ENCODE measurements at regions of chr12 and their contacts with region 1.

Region 1: DNA sequence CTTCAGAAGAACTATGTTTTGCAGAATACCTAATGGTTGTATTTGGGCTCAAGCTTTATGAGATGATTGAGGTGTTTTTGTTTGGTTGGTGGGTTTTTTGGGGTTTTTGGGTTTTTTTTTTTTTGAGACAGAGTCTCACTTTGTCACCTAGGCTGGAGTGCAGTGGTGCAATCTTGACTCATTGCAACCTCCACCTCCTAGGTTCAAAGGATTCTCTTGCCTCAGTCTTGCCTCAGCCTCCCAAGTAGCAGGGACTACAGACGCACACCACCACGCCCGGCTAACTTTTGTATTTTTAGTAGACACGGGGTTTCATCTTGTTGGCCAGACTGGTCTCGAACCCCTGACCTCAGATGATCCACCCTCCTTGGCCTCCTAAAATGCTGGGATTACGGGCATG is 39.6 kb downstream of the ARL1 start:
- DNase-seq: no peak
- H3K4me3 ChIP-seq: no peak overlapping the region
- H3K27ac ChIP-seq: no peak overlapping the region
- H3K4me1 ChIP-seq: no peaks in the 10 kb centered on the region
- H3K27me3 ChIP-seq: no peaks in the 10 kb centered on the region
- CTCF ChIP-seq: no peak
- EP300 ChIP-seq: no peak
- POLR2A ChIP-seq: no peak

Region 2: DNA sequence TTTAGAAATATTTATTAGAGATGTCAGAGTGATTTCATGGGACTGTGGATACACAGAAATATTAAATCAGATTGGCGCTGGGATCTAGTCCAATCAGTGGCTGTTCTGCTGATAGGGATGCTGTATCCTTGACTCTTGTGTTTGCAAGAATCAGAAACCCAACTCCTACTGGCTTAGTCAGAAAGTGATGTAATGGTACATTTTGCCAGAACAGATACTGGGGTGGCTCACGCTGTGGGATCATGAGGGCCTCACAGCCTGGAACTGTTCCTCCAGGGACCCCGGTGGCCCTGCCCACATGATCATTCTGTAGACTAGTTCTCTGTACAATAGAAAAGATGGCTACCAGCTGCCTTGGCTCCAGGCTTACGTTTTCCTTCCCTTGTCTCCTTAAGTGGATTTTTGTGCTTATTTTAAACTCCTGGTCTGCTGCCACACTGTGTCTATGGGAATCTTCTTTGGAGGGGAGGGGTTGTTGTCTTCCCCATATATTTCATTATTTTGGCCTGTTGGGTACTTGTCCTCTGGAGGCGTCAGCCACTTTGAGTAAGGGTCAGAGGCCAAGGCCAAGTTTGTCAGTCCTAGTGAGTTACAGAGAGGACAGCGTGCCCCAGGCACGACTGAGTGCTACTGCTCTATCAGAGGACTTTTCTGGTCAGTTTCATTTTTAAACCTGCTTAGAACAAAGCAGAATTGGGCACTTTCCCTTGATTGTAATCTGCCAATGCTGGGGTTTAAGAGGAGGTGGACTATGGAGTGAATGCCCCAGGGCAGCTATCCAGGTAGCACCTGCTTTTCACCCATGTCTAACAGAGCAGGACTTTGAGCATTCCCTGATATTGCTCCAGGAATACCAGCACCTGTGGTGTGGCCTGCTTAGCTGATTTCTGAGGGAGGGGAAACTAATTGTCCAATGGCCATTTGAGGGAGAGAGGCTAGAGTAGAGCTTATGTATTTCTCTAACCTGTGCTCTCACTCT is 322.2 kb before region 1 on chr12:
- in situ Hi-C with region 1: no loop called
- intact Hi-C with region 1: no loop called
- DNase-seq: no peak
- H3K4me3 ChIP-seq: no peak overlapping the region
- H3K27ac ChIP-seq: no peak overlapping the region
- H3K4me1 ChIP-seq: no peaks in the 10 kb centered on the region
- H3K27me3 ChIP-seq: no peaks in the 10 kb centered on the region
- CTCF ChIP-seq: no peak
- EP300 ChIP-seq: no peak
- POLR2A ChIP-seq: no peak

Region 3: GRCh38 chr12:101209319-101210302 is 158.4 kb before region 1 on chr12 and contains the start of gene SLC5A8:
- in situ Hi-C with region 1: no loop called
- intact Hi-C with region 1: no loop called
- DNase-seq: peak; percentile 9
- H3K4me3 ChIP-seq: no peak within 1 kb of the TSS
- H3K27ac ChIP-seq: no peak within 1 kb of the TSS
- H3K4me1 ChIP-seq: peaks cover 0 to 5% (median 2%) of the 10 kb centered on the region in 4 donors
- H3K27me3 ChIP-seq: peaks cover 31% of the 10 kb centered on the region
- CTCF ChIP-seq: no peak
- EP300 ChIP-seq: no peak
- POLR2A ChIP-seq: no peak
- total RNA-seq, gene SLC5A8: 0.32 TPM in 1 of 4 donors, not detected in the others

Region 4: GRCh38 chr12:101305226-101305779 is 62.7 kb before region 1 on chr12:
- in situ Hi-C with region 1: no loop called
- intact Hi-C with region 1: loop called (anchors 10 kb)
- DNase-seq: no peak
- H3K4me3 ChIP-seq: no peak overlapping the region
- H3K27ac ChIP-seq: no peak overlapping the region
- H3K4me1 ChIP-seq: peaks cover 0 to 7% (median 0%) of the 10 kb centered on the region in 4 donors
- H3K27me3 ChIP-seq: no peaks in the 10 kb centered on the region
- CTCF ChIP-seq: no peak
- EP300 ChIP-seq: no peak
- POLR2A ChIP-seq: no peak

Measured in transverse colon (tissue), 4 donors.